ENCODE measurements at regions of chr7 and their contacts with region 1.

Region 1: GRCh38 chr7:16535509-16535908 is 8.9 kb downstream of the LRRC72 start:
- DNase-seq: no peak

Region 2: GRCh38 chr7:16982640-16983350 is 447.3 kb after region 1 on chr7:
- CTCF ChIA-PET with region 1: interaction called, 10 read pairs
- POLR2A ChIA-PET with region 1: no interaction called
- DNase-seq: peak; percentile 41